Posterior cingulate gyrus (tissue), 11 donors: ENCODE measurements at regions of chr11 and their contacts with region 1.

Region 1: DNA sequence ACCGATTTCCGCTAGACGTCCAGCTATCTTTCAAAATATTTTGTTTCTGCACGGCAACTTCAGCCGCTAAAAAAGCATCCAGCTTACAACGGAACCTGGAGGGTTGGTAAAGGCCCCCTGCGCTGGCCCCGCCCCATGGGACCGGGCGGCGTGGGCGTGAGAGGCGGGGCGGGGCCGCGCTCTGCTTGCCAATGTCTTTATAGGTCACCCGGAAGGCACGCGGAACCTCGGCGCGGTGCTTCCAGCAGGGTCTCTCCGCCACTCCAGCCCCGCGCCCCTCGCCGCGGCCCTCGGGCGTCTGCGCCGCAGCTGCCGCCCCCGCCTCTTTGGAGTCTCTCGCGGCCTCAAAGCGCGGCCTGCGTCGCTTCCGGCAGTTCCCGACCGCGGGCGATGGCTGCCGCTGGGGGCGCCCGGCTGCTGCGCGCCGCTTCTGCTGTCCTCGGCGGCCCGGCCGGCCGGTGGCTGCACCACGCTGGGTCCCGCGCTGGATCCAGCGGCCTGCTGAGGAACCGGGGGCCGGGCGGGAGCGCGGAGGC is at the start of gene FDX1:
- DNase-seq: peak; percentile 63 to 96 (median 76)

Region 2: GRCh38 chr11:109946322-109946846 is 483.4 kb before region 1 on chr11:
- intact Hi-C with region 1: loop called (anchors 5 kb)
- DNase-seq: peak; percentile 59 to 97 (median 85)

Region 3: DNA sequence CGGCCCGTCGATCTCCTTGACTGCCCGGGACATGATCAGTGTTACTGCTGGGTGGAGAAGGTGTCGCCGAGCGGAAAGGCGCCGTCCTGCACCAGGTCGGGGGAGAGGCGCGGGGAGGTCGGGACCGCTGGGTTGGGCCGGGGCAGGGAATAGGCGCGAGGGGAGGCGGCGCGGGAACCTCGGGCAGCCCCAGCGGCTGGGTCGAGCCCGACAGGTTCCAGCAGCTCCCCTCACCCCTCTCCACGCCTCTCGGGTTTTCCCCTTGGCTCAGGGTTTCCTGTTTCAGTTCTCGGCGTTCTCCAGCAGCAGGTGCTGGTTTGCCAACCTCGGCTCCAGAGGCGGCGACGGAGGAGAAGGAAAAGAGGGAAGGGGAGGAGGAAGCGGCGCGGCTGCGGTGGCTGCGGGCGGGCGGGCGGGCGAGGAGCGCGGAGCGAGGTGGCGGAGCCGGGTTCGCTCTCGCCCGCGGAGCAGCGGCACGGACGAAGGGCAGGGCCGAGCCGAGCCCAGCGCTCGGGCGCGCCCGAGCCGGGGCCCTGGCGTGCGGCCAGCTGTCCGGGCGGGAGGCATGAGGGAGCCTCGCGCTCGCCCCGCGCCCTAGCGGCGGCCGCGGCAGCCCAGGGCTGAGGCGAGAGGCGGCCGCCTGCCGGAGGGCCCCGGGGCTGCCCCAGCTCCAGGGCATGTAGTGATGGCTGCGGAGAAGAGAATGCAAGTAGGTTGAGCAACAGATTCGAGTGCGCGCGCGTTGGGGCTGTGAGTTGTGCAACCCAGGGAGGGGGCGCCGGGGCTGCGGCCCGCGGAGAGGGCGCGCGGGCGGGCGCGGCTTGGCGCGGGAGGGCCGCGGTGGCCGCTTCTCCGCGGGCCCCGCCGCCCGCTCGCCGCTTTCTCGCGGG is 337.0 kb before region 1 on chr11 and contains the start of gene ZC3H12C:
- intact Hi-C with region 1: loop called (anchors 5 kb)
- DNase-seq: peak; percentile 64 to 96 (median 78)

Region 4: GRCh38 chr11:110296226-110297075 is 133.3 kb before region 1 on chr11 and contains the start of gene RDX:
- intact Hi-C with region 1: loop called (anchors 5 kb)
- DNase-seq: peak; percentile 47 to 95 (median 66)

Region 5: GRCh38 chr11:110376711-110377324 is 53.0 kb before region 1 on chr11:
- intact Hi-C with region 1: loop called (anchors 5 kb)
- DNase-seq: peak in 4 of 10 donors; percentile 17 to 61 (median 26)

Region 6: DNA sequence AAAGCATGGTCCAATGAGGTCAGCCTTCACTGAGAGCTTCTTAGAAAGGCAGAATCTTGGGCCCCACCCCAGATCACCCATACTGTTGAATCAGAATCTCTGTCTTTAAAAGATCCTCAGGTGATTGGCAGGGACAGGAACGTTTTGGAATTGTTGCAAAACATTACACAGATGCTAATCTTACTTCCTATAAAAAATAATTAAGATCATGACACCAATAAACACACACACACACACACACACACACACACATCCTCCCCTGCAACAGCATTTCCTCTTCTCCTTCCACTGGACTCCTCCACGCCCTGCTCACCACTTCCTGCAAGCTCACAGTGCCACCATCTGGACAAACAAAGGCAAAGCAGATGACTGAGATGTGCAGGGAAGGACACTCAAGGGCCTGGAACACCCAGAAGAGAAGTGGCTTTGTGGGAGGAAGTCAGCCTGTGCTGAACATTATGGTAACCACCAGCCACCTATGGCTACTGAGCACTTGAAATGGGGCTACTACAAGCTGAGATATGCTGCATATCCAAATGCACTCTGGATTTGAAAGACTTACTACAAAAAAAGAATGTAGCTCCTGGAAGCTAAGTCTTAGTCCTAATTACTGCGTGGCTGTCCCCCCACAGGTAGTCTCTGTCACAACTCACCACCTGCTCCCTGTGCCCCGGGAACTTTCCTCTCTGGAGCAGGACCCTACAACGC is 1016.8 kb after region 1 on chr11:
- intact Hi-C with region 1: loop called (anchors 10 kb)
- DNase-seq: peak; percentile 56 to 96 (median 80)